MCF 10A (cell line): ENCODE measurements at regions of chr18 and their contacts with region 1.

Region 1: DNA sequence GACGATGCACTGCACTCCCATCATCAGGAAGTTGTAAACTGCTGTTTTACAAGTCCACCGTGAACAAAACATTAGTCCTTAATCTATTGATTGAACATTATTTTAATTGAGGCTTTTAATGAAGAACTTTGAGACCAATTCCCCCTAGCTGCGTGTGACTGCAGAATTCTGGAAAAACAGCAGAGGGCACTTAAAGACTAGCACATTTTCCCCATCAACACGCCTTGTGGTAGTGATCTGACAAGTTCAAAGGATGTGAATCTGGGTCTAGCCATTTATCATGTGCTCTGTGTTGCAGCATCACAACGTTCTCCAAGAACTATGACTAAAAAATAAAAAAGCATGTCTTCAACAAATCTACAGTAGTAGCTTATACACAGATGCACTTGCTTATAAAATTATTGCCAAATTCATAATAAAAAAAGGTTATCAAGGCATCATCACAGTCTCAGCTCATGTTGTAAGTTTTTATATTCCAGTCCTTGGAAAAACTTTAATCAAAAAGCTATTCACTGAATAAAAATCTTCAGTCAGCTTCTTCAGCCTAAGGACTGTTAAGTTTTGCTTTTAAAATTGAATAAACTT is 35.8 kb downstream of the SKOR2 start:
- DNase-seq: peak; percentile 61
- H3K4me3 Mint-ChIP-seq: no peak overlapping the region
- H3K27ac Mint-ChIP-seq: no peak overlapping the region
- H3K4me1 Mint-ChIP-seq: no peaks in the 10 kb centered on the region
- H3K27me3 Mint-ChIP-seq: peaks cover 82% of the 10 kb centered on the region
- CTCF ChIP-seq: peak; percentile 59

Region 2: GRCh38 chr18:46899274-46899948 is 316.2 kb before region 1 on chr18:
- CTCF ChIA-PET with region 1: no interaction called
- POLR2A ChIA-PET with region 1: no interaction called
- intact Hi-C with region 1: no loop called
- DNase-seq: no peak
- H3K4me3 Mint-ChIP-seq: no peak overlapping the region
- H3K27ac Mint-ChIP-seq: peak overlapping the region; percentile 67
- H3K4me1 Mint-ChIP-seq: no peaks in the 10 kb centered on the region
- H3K27me3 Mint-ChIP-seq: no peaks in the 10 kb centered on the region
- CTCF ChIP-seq: no peak

Region 3: GRCh38 chr18:47050468-47050867 is 165.2 kb before region 1 on chr18:
- CTCF ChIA-PET with region 1: interaction called, 10 read pairs
- POLR2A ChIA-PET with region 1: no interaction called
- intact Hi-C with region 1: no loop called
- DNase-seq: peak; percentile 60
- H3K4me3 Mint-ChIP-seq: no peak overlapping the region
- H3K27ac Mint-ChIP-seq: no peak overlapping the region
- H3K4me1 Mint-ChIP-seq: peaks cover 5% of the 10 kb centered on the region
- H3K27me3 Mint-ChIP-seq: peaks cover 14% of the 10 kb centered on the region
- CTCF ChIP-seq: peak; percentile 71

Region 4: DNA sequence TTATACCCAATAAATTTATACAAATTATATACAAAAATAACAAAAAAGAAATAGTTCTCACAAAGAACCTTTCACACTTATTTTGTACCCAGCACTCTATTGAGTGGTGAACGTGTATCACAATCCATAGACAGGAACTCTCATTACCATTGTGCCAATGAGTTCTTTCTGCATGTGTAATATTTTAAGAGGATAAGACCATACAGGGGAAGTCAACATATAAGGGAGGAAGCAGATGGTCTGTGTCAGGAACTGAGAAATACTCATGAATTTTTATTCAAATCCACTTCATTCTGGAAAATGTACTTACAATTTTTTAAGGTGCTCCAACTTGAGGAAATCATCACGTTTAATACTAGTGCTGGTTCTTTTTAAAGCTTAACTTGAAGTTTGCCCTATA is 153.2 kb before region 1 on chr18:
- CTCF ChIA-PET with region 1: no interaction called
- POLR2A ChIA-PET with region 1: no interaction called
- intact Hi-C with region 1: no loop called
- DNase-seq: no peak
- H3K4me3 Mint-ChIP-seq: no peak overlapping the region
- H3K27ac Mint-ChIP-seq: no peak overlapping the region
- H3K4me1 Mint-ChIP-seq: no peaks in the 10 kb centered on the region
- H3K27me3 Mint-ChIP-seq: no peaks in the 10 kb centered on the region
- CTCF ChIP-seq: no peak

Region 5: GRCh38 chr18:47150029-47150823 is 65.4 kb before region 1 on chr18 and contains the start of gene HDHD2:
- CTCF ChIA-PET with region 1: no interaction called
- POLR2A ChIA-PET with region 1: no interaction called
- intact Hi-C with region 1: no loop called
- DNase-seq: peak; percentile 76
- H3K4me3 Mint-ChIP-seq: peak within 1 kb of the TSS; percentile 96
- H3K27ac Mint-ChIP-seq: peak within 1 kb of the TSS; percentile 98
- H3K4me1 Mint-ChIP-seq: peaks cover 33% of the 10 kb centered on the region
- H3K27me3 Mint-ChIP-seq: no peaks in the 10 kb centered on the region
- CTCF ChIP-seq: no peak
- total RNA-seq, gene HDHD2: 32.6 and 48.0 TPM in 2 replicates

Region 6: DNA sequence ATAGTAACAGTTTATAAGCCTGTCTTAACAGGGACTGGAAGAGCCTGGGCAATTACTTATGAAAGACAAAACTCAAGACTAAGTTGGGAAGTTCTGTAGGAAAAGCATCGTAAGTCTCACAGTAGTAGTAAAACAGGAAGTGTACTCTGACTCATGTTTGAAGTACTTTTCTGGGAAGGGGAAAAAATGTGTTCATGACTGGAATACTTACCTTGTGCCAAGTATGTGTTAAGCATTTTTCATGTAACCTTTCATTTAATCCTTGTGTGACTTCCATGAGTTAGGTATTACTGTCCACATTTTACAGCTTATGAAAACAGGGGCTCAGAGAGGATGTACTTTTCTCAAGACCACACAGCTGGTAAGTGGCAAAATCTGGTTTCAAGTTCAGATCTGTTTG is 49.6 kb after region 1 on chr18:
- CTCF ChIA-PET with region 1: interaction called, 11 read pairs
- POLR2A ChIA-PET with region 1: no interaction called
- intact Hi-C with region 1: no loop called
- DNase-seq: peak; percentile 68
- H3K4me3 Mint-ChIP-seq: no peak overlapping the region
- H3K27ac Mint-ChIP-seq: no peak overlapping the region
- H3K4me1 Mint-ChIP-seq: peaks cover 7% of the 10 kb centered on the region
- H3K27me3 Mint-ChIP-seq: peaks cover 14% of the 10 kb centered on the region
- CTCF ChIP-seq: no peak

Region 7: GRCh38 chr18:47283476-47283875 is 67.8 kb after region 1 on chr18:
- CTCF ChIA-PET with region 1: interaction called, 7 read pairs
- POLR2A ChIA-PET with region 1: no interaction called
- intact Hi-C with region 1: loop called (anchors 1 kb)
- DNase-seq: peak; percentile 63
- H3K4me3 Mint-ChIP-seq: no peak overlapping the region
- H3K27ac Mint-ChIP-seq: no peak overlapping the region
- H3K4me1 Mint-ChIP-seq: no peaks in the 10 kb centered on the region
- H3K27me3 Mint-ChIP-seq: peaks cover 86% of the 10 kb centered on the region
- CTCF ChIP-seq: peak; percentile 36

Region 8: GRCh38 chr18:47748847-47749599 is 533.4 kb after region 1 on chr18:
- CTCF ChIA-PET with region 1: interaction called, 88 read pairs
- POLR2A ChIA-PET with region 1: no interaction called
- intact Hi-C with region 1: loop called (anchors 1 kb)
- DNase-seq: peak; percentile 60
- H3K4me3 Mint-ChIP-seq: peak overlapping the region; percentile 59
- H3K27ac Mint-ChIP-seq: peak overlapping the region; percentile 49
- H3K4me1 Mint-ChIP-seq: no peaks in the 10 kb centered on the region
- H3K27me3 Mint-ChIP-seq: peaks cover 15% of the 10 kb centered on the region
- CTCF ChIP-seq: peak; percentile 99

Region 9: DNA sequence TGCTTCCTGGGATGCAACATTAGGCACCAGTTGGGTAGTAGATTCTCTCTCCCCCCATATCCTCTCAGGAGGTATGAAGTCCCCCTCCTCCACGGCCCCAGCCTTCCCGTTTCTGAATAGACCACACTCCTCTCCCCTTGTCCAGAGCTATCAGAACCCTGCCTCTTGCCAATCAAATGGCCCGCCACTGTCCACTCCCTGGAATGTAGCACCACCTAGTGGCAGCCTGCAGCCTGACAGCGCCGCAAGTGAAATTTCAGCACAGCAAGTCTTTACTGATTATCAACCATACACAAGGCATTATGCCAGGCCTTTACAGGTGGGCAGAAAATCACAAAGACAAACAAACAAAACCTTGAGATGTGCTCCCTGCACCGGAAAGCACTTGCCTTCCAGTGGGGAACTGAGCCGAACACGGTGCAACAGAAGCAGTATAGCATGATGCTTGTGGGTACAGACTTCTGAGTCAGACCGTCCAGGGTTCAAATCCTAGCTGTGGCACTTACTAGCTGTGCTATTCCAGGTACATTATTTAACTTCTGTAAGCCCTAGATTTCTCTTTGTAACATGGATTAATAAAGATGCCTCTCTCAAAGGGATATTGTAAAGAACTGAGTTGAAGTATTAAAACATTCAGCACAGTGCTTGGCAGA is 540.8 kb after region 1 on chr18:
- CTCF ChIA-PET with region 1: interaction called, 37 read pairs
- POLR2A ChIA-PET with region 1: no interaction called
- intact Hi-C with region 1: no loop called
- DNase-seq: peak; percentile 56
- H3K4me3 Mint-ChIP-seq: no peak overlapping the region
- H3K27ac Mint-ChIP-seq: no peak overlapping the region
- H3K4me1 Mint-ChIP-seq: no peaks in the 10 kb centered on the region
- H3K27me3 Mint-ChIP-seq: no peaks in the 10 kb centered on the region
- CTCF ChIP-seq: peak; percentile 89